ENCODE measurements at regions of chr2 and their contacts with region 1.

Region 1: GRCh38 chr2:68467077-68467960 is at the starts of genes APLF and FBXO48:
- DNase-seq: peak; percentile 96 to 99 (median 99)
- H3K4me3 ChIP-seq: peak within 1 kb of the TSS; percentile 98
- H3K4me3 Mint-ChIP-seq: peak within 1 kb of the TSS; percentile 92 to 99 (median 97)
- H3K27ac ChIP-seq: peak within 1 kb of the TSS; percentile 92
- H3K27ac Mint-ChIP-seq: peak within 1 kb of the TSS; percentile 90 to 99 (median 96)
- H3K4me1 ChIP-seq: peaks cover 25% of the 10 kb centered on the region
- H3K4me1 Mint-ChIP-seq: peaks cover 31 to 56% (median 42%) of the 10 kb centered on the region in 3 donors
- H3K27me3 ChIP-seq: no peaks in the 10 kb centered on the region
- H3K27me3 Mint-ChIP-seq: no peaks in the 10 kb centered on the region
- total RNA-seq, gene APLF: 3.6 to 4.0 TPM
- total RNA-seq, gene FBXO48: 1.5 to 1.6 TPM

Region 2: DNA sequence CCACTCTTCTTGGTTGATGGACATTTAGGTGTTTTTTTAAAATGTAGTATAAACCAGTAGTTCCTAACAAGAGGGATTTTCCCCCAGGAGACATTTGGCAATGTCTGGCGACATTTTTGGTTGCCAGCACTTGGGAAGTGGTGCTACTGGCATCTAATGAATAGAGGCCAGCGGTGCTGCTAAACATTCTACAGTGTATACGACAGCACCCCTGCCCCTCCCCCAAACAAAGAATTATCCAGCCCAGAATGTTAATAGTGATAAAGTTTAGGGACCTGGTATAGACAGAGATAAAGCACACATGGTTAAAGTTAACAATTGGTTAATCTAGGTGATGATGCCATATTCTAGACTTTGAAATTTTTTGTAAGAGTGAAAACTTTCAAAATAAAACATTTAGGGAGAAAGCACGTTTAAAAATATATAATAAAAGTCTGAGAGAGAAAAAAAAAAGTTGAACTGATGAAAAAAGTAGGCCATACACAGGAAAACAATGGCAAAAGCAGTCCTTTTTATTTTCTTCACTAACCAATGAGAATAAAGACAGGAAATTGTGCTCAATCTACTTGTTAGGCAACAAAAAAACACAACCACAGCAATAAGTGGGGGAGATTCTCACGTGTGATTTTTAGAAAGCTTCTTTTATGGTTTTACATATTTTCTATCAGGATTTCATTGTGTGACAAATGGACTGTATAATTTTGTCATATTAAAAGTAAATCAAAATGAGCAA is 15.0 kb before region 1 on chr2:
- CTCF ChIA-PET with region 1: interaction called, 19 read pairs
- POLR2A ChIA-PET with region 1: interaction called, 8 read pairs
- DNase-seq: peak in 2 of 5 donors; percentile 61 to 64
- H3K4me3 ChIP-seq: no peak overlapping the region
- H3K4me3 Mint-ChIP-seq: peak overlapping the region; percentile 3 to 57 (median 49)
- H3K27ac ChIP-seq: no peak overlapping the region
- H3K27ac Mint-ChIP-seq: peak overlapping the region in 7 of 8 donors; percentile 38 to 93 (median 82)
- H3K4me1 ChIP-seq: peaks cover 8% of the 10 kb centered on the region
- H3K4me1 Mint-ChIP-seq: peaks cover 21 to 23% (median 21%) of the 10 kb centered on the region in 3 donors
- H3K27me3 ChIP-seq: no peaks in the 10 kb centered on the region
- H3K27me3 Mint-ChIP-seq: no peaks in the 10 kb centered on the region

Region 3: GRCh38 chr2:68487773-68488355 is 20.5 kb after region 1 on chr2:
- CTCF ChIA-PET with region 1: interaction called, 14 read pairs
- POLR2A ChIA-PET with region 1: interaction called, 3 read pairs
- DNase-seq: no peak
- H3K4me3 ChIP-seq: no peak overlapping the region
- H3K4me3 Mint-ChIP-seq: no peak overlapping the region
- H3K27ac ChIP-seq: no peak overlapping the region
- H3K27ac Mint-ChIP-seq: no peak overlapping the region
- H3K4me1 ChIP-seq: no peaks in the 10 kb centered on the region
- H3K4me1 Mint-ChIP-seq: peaks cover 2 to 5% (median 4%) of the 10 kb centered on the region in 3 donors
- H3K27me3 ChIP-seq: no peaks in the 10 kb centered on the region
- H3K27me3 Mint-ChIP-seq: no peaks in the 10 kb centered on the region

Region 4: GRCh38 chr2:68594674-68595492 is 127.6 kb after region 1 on chr2:
- CTCF ChIA-PET with region 1: interaction called, 55 read pairs
- POLR2A ChIA-PET with region 1: interaction called, 4 read pairs
- DNase-seq: peak; percentile 33 to 67 (median 40)
- H3K4me3 ChIP-seq: no peak overlapping the region
- H3K4me3 Mint-ChIP-seq: peak overlapping the region in 5 of 7 donors; percentile 3 to 57 (median 23)
- H3K27ac ChIP-seq: no peak overlapping the region
- H3K27ac Mint-ChIP-seq: peak overlapping the region in 4 of 8 donors; percentile 1 to 22 (median 6)
- H3K4me1 ChIP-seq: peaks cover 5% of the 10 kb centered on the region
- H3K4me1 Mint-ChIP-seq: peaks cover 3 to 13% (median 12%) of the 10 kb centered on the region in 3 donors
- H3K27me3 ChIP-seq: no peaks in the 10 kb centered on the region
- H3K27me3 Mint-ChIP-seq: peaks cover 1 to 15% of the 10 kb centered on the region in 2 donors

Region 5: DNA sequence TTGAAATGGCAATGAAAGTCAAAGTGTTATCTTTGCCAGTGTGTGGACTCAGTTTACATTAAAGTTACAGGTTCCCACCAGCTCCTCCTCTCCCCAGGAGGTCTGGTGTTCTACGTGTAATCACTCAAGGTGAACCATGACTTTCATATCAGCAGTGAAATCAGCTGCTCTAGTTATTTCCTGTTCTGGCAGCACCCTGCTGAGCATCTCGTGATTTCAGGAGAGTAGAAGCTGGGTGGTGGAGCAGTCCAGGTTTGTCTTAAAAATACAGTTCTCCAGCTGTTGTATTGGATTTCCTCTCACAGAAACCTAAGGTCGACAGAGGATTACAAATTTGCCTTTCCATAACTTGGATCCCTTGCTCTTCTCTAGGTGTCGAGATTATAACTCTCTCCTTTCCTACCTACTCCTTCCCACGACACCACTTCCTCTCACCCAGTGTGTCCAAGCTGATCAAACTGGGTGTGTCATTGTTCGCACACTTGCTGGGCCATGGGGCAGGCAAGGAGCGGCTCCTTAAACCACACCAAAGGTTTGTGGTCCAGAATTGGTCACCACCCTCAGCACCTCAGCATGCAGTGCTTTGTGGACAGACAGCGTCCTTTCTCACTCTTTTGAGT is 254.3 kb after region 1 on chr2:
- CTCF ChIA-PET with region 1: interaction called, 11 read pairs
- POLR2A ChIA-PET with region 1: interaction called, 3 read pairs
- DNase-seq: peak in 4 of 5 donors; percentile 20 to 69 (median 48)
- H3K4me3 ChIP-seq: peak overlapping the region; percentile 38
- H3K4me3 Mint-ChIP-seq: peak overlapping the region; percentile 42 to 86 (median 79)
- H3K27ac ChIP-seq: peak overlapping the region; percentile 43
- H3K27ac Mint-ChIP-seq: peak overlapping the region; percentile 83 to 99 (median 92)
- H3K4me1 ChIP-seq: peaks cover 82% of the 10 kb centered on the region
- H3K4me1 Mint-ChIP-seq: peaks cover 85 to 98% (median 96%) of the 10 kb centered on the region in 3 donors
- H3K27me3 ChIP-seq: no peaks in the 10 kb centered on the region
- H3K27me3 Mint-ChIP-seq: no peaks in the 10 kb centered on the region

Measured in CD8-positive, alpha-beta memory T cell (primary cell).